Spleen (tissue), 13 donors: ENCODE measurements at regions of chr11 and their contacts with region 1.

Region 1: DNA sequence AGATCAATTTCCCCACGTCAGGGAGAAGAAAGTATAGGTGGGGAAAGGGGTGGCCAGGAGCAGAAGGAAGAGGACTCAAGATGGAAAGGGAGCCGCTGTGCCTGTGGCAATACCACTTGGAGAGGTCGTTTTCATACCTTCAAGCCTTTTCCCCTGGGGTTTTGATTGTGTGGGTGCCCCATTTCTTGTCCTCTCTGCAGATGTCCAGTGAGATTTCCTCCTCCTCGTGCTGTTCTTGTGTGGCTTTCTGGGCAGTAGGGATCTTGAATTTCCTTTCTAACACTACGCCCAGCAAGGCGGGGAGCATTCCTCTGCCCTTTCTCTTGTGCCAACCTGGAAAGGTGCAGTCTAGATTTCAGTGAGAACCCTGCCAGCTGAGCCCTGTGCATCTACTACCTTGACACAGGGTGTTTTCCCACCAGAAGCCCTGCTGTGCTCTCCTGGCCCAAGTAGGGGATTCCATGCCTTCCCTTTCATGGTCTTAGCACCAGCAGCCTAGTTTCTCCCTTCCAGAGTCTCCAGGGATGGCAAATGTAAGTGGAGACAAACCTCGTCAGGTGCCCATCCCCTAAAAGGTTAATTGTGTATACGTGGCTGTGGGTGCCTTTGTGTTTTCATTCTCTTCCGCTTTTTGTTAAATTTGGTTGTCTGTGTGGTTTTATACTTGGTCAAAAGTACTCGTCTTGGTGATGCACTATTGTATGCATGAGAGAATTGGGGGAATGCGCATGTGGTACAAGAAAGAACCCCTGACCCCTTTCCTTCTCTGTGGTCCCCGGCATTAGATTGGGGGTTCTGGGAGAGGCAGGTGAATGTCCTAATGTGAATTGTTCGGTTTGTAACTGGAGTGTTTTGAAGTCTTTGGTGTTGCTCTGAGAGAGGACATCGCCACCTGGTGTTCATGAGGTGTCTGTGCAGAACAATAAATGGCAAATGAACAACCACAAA is 71.4 kb upstream of the MPEG1 start:
- DNase-seq: no peak
- H3K4me3 ChIP-seq: peak overlapping the region in 2 of 8 donors; percentile 2 to 52
- H3K27ac ChIP-seq: peak overlapping the region in 6 of 8 donors; percentile 16 to 81 (median 48)
- H3K4me1 ChIP-seq: peaks cover 0 to 33% (median 20%) of the 10 kb centered on the region in 6 donors
- H3K27me3 ChIP-seq: no peaks in the 10 kb centered on the region
- CTCF ChIP-seq: peak; percentile 60 to 93 (median 83)
- POLR2A ChIP-seq: no peak

Region 2: GRCh38 chr11:59207988-59208451 is 76.1 kb before region 1 on chr11:
- intact Hi-C with region 1: loop called (anchors 10 kb)
- DNase-seq: no peak
- H3K4me3 ChIP-seq: peak overlapping the region; percentile 27 to 69 (median 50)
- H3K27ac ChIP-seq: peak overlapping the region in 7 of 8 donors; percentile 29 to 92 (median 88)
- H3K4me1 ChIP-seq: peaks cover 15 to 85% (median 41%) of the 10 kb centered on the region in 6 donors
- H3K27me3 ChIP-seq: no peaks in the 10 kb centered on the region
- CTCF ChIP-seq: peak; percentile 28 to 83 (median 71)
- POLR2A ChIP-seq: peak in 1 of 3 donors; percentile 12

Region 3: DNA sequence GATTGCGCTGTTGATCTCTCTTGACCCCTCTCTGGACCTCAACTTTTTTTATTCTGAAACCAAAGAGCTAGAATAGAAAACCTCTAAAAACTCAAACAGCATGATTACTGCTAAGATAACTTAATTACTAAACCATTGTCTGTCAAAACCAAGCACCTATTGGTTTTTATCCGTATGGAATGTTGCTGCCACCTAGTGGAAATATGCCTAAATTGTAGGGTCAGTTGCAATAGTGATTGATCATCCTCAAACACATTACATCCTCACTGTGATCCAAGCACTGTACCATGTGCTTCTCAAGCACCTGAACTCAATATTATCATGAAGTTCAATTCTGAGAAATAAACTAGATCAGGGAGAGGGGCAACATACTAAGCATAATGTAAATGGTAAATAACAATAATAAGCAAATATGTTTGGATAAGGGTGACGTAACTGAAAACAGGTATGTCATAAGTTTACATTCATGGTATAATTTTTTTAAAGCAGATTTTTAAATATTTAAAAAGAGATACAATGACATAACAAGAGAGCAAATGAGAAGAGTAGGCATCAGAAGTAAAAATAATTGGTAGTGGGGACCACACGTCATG is 145.9 kb after region 1 on chr11:
- intact Hi-C with region 1: loop called (anchors 10 kb)
- DNase-seq: no peak
- H3K4me3 ChIP-seq: no peak overlapping the region
- H3K27ac ChIP-seq: no peak overlapping the region
- H3K4me1 ChIP-seq: no peaks in the 10 kb centered on the region
- H3K27me3 ChIP-seq: peaks cover 0 to 5% (median 0%) of the 10 kb centered on the region in 7 donors
- CTCF ChIP-seq: peak; percentile 63 to 86 (median 79)
- POLR2A ChIP-seq: no peak